CD4-positive, alpha-beta memory T cell (primary cell): ENCODE measurements at regions of chr19 and their contacts with region 1.

Region 1: GRCh38 chr19:20167020-20167644 is at the start of gene ZNF486:
- DNase-seq: peak; percentile 90 to 95 (median 93)
- H3K4me3 ChIP-seq: peak within 1 kb of the TSS; percentile 39 to 87
- H3K4me3 Mint-ChIP-seq: peak within 1 kb of the TSS; percentile 95 to 99 (median 98)
- H3K27ac ChIP-seq: peak within 1 kb of the TSS; percentile 73
- H3K27ac Mint-ChIP-seq: peak within 1 kb of the TSS; percentile 89 to 97 (median 94)
- H3K4me1 ChIP-seq: peaks cover 21% of the 10 kb centered on the region
- H3K4me1 Mint-ChIP-seq: peaks cover 24 to 55% (median 40%) of the 10 kb centered on the region in 4 donors
- H3K27me3 ChIP-seq: no peaks in the 10 kb centered on the region
- H3K27me3 Mint-ChIP-seq: no peaks in the 10 kb centered on the region
- total RNA-seq, gene ZNF486: 11.0 to 11.7 TPM

Region 2: DNA sequence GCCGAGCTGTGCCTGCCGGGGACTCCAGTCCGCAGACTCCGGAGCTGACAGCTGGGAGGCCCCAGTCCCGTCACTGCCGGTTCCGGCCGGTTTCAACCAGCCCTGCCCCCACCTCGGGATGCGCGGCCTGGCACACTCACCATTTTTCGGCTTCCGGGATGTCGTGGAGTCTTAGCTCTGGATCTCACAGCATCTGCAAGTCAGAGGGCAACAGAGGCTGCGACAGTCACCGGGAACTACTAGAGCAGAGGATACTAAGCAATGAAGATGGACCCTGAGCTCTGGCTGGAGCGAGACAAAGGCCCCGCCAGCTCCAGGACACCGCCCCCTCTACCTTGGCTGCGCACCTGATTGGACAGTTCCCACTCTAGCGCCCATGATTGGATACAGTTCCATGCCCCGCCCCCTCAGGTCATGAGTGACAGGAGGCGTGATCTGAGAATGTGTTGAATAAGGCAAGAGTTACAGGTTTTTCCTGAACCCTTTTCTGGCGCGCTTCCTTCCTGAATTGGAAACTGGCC is 127.9 kb before region 1 on chr19 and contains the start of gene ZNF682:
- CTCF ChIA-PET with region 1: no interaction called
- POLR2A ChIA-PET with region 1: interaction called, 15 read pairs
- intact Hi-C with region 1: loop called (anchors 2 kb)
- DNase-seq: peak; percentile 93 to 97 (median 94)
- H3K4me3 ChIP-seq: peak within 1 kb of the TSS; percentile 79 to 96
- H3K4me3 Mint-ChIP-seq: peak within 1 kb of the TSS; percentile 95 to 98 (median 97)
- H3K27ac ChIP-seq: peak within 1 kb of the TSS; percentile 66
- H3K27ac Mint-ChIP-seq: peak within 1 kb of the TSS; percentile 95 to 98 (median 97)
- H3K4me1 ChIP-seq: peaks cover 13% of the 10 kb centered on the region
- H3K4me1 Mint-ChIP-seq: peaks cover 13 to 27% (median 18%) of the 10 kb centered on the region in 4 donors
- H3K27me3 ChIP-seq: no peaks in the 10 kb centered on the region
- H3K27me3 Mint-ChIP-seq: peaks cover 0 to 3% of the 10 kb centered on the region in 2 donors
- total RNA-seq, gene ZNF682: 7.3 TPM

Region 3: GRCh38 chr19:20051841-20052768 is 115.0 kb before region 1 on chr19:
- CTCF ChIA-PET with region 1: no interaction called
- POLR2A ChIA-PET with region 1: interaction called, 15 read pairs
- intact Hi-C with region 1: loop called (anchors 1 kb)
- DNase-seq: peak; percentile 43 to 58 (median 48)
- H3K4me3 ChIP-seq: peak overlapping the region; percentile 53 to 95
- H3K4me3 Mint-ChIP-seq: peak overlapping the region; percentile 94 to 100 (median 99)
- H3K27ac ChIP-seq: peak overlapping the region; percentile 62
- H3K27ac Mint-ChIP-seq: peak overlapping the region; percentile 75 to 97 (median 94)
- H3K4me1 ChIP-seq: peaks cover 8% of the 10 kb centered on the region
- H3K4me1 Mint-ChIP-seq: peaks cover 3 to 22% (median 14%) of the 10 kb centered on the region in 4 donors
- H3K27me3 ChIP-seq: no peaks in the 10 kb centered on the region
- H3K27me3 Mint-ChIP-seq: no peaks in the 10 kb centered on the region

Region 4: GRCh38 chr19:20077791-20078463 is 89.2 kb before region 1 on chr19 and contains the start of gene ZNF90:
- CTCF ChIA-PET with region 1: interaction called, 3 read pairs
- POLR2A ChIA-PET with region 1: interaction called, 18 read pairs
- intact Hi-C with region 1: no loop called
- DNase-seq: peak; percentile 81 to 93 (median 89)
- H3K4me3 ChIP-seq: peak within 1 kb of the TSS; percentile 64 to 81
- H3K4me3 Mint-ChIP-seq: peak within 1 kb of the TSS; percentile 88 to 93 (median 90)
- H3K27ac ChIP-seq: no peak within 1 kb of the TSS
- H3K27ac Mint-ChIP-seq: peak within 1 kb of the TSS; percentile 22 to 79 (median 52)
- H3K4me1 ChIP-seq: peaks cover 11% of the 10 kb centered on the region
- H3K4me1 Mint-ChIP-seq: peaks cover 9 to 31% (median 14%) of the 10 kb centered on the region in 4 donors
- H3K27me3 ChIP-seq: no peaks in the 10 kb centered on the region
- H3K27me3 Mint-ChIP-seq: no peaks in the 10 kb centered on the region
- total RNA-seq, gene ZNF90: 5.4 to 6.2 TPM

Region 5: GRCh38 chr19:20124879-20125278 is 42.3 kb before region 1 on chr19:
- CTCF ChIA-PET with region 1: no interaction called
- POLR2A ChIA-PET with region 1: no interaction called
- intact Hi-C with region 1: no loop called
- DNase-seq: no peak
- H3K4me3 ChIP-seq: no peak overlapping the region
- H3K4me3 Mint-ChIP-seq: no peak overlapping the region
- H3K27ac ChIP-seq: no peak overlapping the region
- H3K27ac Mint-ChIP-seq: no peak overlapping the region
- H3K4me1 ChIP-seq: no peaks in the 10 kb centered on the region
- H3K4me1 Mint-ChIP-seq: no peaks in the 10 kb centered on the region
- H3K27me3 ChIP-seq: no peaks in the 10 kb centered on the region
- H3K27me3 Mint-ChIP-seq: no peaks in the 10 kb centered on the region

Region 6: GRCh38 chr19:20237761-20238623 is 70.9 kb after region 1 on chr19:
- CTCF ChIA-PET with region 1: no interaction called
- POLR2A ChIA-PET with region 1: interaction called, 5 read pairs
- intact Hi-C with region 1: loop called (anchors 5 kb)
- DNase-seq: peak; percentile 85 to 89 (median 88)
- H3K4me3 ChIP-seq: peak overlapping the region; percentile 78 to 95
- H3K4me3 Mint-ChIP-seq: peak overlapping the region; percentile 94 to 99 (median 98)
- H3K27ac ChIP-seq: peak overlapping the region; percentile 54
- H3K27ac Mint-ChIP-seq: peak overlapping the region; percentile 79 to 95 (median 92)
- H3K4me1 ChIP-seq: no peaks in the 10 kb centered on the region
- H3K4me1 Mint-ChIP-seq: peaks cover 6 to 13% (median 11%) of the 10 kb centered on the region in 4 donors
- H3K27me3 ChIP-seq: no peaks in the 10 kb centered on the region
- H3K27me3 Mint-ChIP-seq: no peaks in the 10 kb centered on the region

Region 7: GRCh38 chr19:20661150-20661819 is 494.2 kb after region 1 on chr19 and contains the start of gene ZNF626:
- CTCF ChIA-PET with region 1: no interaction called
- POLR2A ChIA-PET with region 1: interaction called, 7 read pairs
- intact Hi-C with region 1: loop called (anchors 5 kb)
- DNase-seq: peak; percentile 88 to 95 (median 92)
- H3K4me3 ChIP-seq: peak within 1 kb of the TSS; percentile 36 to 60
- H3K4me3 Mint-ChIP-seq: peak within 1 kb of the TSS; percentile 90 to 98 (median 97)
- H3K27ac ChIP-seq: peak within 1 kb of the TSS; percentile 81
- H3K27ac Mint-ChIP-seq: peak within 1 kb of the TSS; percentile 91 to 98 (median 97)
- H3K4me1 ChIP-seq: peaks cover 12% of the 10 kb centered on the region
- H3K4me1 Mint-ChIP-seq: peaks cover 20 to 73% (median 46%) of the 10 kb centered on the region in 4 donors
- H3K27me3 ChIP-seq: no peaks in the 10 kb centered on the region
- H3K27me3 Mint-ChIP-seq: no peaks in the 10 kb centered on the region
- total RNA-seq, gene ZNF626: 18.6 to 19.8 TPM